H1 (cell line): ENCODE measurements at regions of chr11 and their contacts with region 1.

Region 1: GRCh38 chr11:111213256-111213655 is 32.3 kb upstream of the POU2AF2 start:
- DNase-seq: no peak
- H3K4me3 ChIP-seq: no peak overlapping the region
- H3K27ac ChIP-seq: no peak overlapping the region
- H3K4me1 ChIP-seq: no peaks in the 10 kb centered on the region
- H3K27me3 ChIP-seq: no peaks in the 10 kb centered on the region
- CTCF ChIP-seq: no peak
- EP300 ChIP-seq: no peak
- POLR2A ChIP-seq: no peak
- RAD21 ChIP-seq: no peak

Region 2: GRCh38 chr11:111230122-111230465 is 16.8 kb after region 1 on chr11:
- CTCF ChIA-PET with region 1: interaction called, 10 read pairs
- POLR2A ChIA-PET with region 1: no interaction called
- DNase-seq: no peak
- H3K4me3 ChIP-seq: no peak overlapping the region
- H3K27ac ChIP-seq: no peak overlapping the region
- H3K4me1 ChIP-seq: no peaks in the 10 kb centered on the region
- H3K27me3 ChIP-seq: no peaks in the 10 kb centered on the region
- CTCF ChIP-seq: no peak
- EP300 ChIP-seq: no peak
- POLR2A ChIP-seq: no peak
- RAD21 ChIP-seq: no peak

Region 3: DNA sequence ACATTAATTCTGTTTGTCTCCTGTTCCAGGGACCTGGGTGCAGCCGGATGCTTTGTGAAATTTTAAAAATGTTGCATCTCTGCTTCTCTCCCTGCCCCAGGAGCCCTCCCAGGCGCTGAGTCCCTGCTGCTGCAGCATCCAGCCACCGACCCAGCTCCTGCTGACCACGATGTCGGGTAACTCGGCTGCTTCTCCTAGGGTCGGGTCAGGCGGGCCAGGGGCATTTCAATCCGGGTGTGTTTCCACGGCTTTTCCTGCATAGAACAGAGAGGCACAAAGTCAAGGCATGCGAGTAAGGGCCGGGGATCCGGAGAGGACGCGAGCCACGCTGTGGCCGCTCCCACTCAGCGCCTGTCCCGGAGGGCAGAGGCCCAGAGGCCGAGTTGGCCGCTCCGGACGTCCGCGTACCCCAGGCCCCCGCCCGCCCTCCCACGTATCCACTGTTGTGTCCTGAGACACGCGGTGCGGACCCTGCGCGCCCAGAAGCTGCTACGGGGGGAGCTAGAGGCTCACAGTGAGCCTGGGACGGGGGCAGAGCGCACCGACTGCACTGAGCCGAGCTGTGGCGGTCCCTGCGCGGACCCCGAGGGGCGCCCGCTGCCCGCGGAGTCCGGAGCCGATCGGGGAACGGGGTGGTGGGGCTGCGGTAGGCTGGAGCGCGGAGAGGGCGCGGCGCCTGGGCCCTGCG is 85.3 kb after region 1 on chr11 and contains the start of gene POU2AF3:
- CTCF ChIA-PET with region 1: no interaction called
- POLR2A ChIA-PET with region 1: no interaction called
- DNase-seq: no peak
- H3K4me3 ChIP-seq: peak within 1 kb of the TSS; percentile 69 to 95 (median 76)
- H3K27ac ChIP-seq: no peak within 1 kb of the TSS
- H3K4me1 ChIP-seq: peaks cover 1 to 9% (median 6%) of the 10 kb centered on the region in 4 experiments; a peak in 6 of 7 replicates
- H3K27me3 ChIP-seq: peaks cover 0 to 33% (median 16%) of the 10 kb centered on the region in 4 experiments; a peak in 5 of 7 replicates
- CTCF ChIP-seq: no peak
- EP300 ChIP-seq: no peak
- POLR2A ChIP-seq: no peak
- RAD21 ChIP-seq: no peak
- total RNA-seq, gene POU2AF3: 1.2 and 1.6 TPM in 2 replicates